ENCODE measurements at regions of chr15 and their contacts with region 1.

Region 1: DNA sequence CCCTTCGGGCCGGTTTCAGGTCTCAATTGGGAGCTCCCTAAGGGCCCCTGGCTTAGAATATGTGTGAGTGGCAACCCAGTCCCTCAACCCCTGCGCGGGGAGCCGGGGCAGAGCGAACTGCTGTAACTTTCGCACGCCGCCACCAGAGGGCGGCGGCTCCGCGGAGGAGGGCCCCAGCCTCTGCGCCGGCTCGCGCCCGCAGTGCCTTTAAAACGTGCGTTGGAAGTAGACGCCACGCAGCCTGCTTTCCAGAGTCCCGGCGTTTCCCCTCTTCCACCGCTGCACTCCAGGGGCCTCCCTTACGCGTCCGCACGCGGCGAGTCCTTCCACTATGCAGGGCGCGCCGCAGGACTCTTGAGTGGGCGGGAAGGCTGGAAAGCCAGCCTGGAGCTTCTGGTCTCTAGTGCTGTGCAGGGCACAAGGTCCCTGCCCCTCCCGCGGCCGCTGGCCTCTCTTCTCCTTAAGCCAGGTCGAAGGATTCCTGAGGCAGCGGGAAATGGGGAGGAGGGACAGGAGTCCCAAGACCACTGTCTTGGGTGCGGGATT is 23.7 kb upstream of the RNU6-1 start:
- DNase-seq: peak; percentile 62
- H3K4me3 ChIP-seq: peak overlapping the region; percentile 28 to 31
- H3K27ac ChIP-seq: peak overlapping the region; percentile 27 to 54
- H3K4me1 ChIP-seq: no peaks in the 10 kb centered on the region
- H3K27me3 ChIP-seq: no peaks in the 10 kb centered on the region
- CTCF ChIP-seq: peak; percentile 88 to 97 (median 94)
- POLR2A ChIP-seq: no peak

Region 2: DNA sequence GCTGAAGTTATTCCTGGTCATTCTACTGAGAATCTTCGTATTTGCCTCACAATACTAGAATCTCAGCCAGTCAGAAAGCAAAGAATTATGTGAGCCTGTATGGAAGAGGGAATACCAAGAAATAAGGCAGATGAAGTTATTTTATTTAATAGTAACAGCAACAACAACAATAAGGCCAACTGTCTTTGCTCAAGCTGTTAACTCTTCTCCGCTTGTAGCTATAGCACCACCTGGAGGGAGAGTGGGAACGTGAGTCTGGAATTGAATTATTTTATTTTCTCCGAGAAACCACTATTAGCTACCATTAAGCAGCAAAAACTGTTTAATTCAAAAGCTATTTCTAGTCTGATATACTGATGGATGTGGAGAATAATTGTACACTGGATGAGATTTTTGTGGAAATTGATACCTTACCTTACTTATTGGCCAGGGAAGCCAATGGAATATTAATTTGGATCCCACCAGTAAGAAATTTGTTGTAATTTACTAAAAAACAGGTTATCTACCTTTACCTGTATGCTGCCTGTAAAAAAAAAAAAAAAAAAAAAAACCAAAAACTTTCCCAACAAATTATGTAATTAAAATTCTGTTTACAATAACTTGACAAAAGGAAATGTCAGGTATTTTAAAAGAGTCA is 291.5 kb after region 1 on chr15:
- intact Hi-C with region 1: loop called (anchors 2 kb)
- DNase-seq: peak; percentile 35
- H3K4me3 ChIP-seq: no peak overlapping the region
- H3K27ac ChIP-seq: no peak overlapping the region
- H3K4me1 ChIP-seq: no peaks in the 10 kb centered on the region
- H3K27me3 ChIP-seq: no peaks in the 10 kb centered on the region
- CTCF ChIP-seq: peak; percentile 49 to 84 (median 76)
- POLR2A ChIP-seq: no peak

Region 3: DNA sequence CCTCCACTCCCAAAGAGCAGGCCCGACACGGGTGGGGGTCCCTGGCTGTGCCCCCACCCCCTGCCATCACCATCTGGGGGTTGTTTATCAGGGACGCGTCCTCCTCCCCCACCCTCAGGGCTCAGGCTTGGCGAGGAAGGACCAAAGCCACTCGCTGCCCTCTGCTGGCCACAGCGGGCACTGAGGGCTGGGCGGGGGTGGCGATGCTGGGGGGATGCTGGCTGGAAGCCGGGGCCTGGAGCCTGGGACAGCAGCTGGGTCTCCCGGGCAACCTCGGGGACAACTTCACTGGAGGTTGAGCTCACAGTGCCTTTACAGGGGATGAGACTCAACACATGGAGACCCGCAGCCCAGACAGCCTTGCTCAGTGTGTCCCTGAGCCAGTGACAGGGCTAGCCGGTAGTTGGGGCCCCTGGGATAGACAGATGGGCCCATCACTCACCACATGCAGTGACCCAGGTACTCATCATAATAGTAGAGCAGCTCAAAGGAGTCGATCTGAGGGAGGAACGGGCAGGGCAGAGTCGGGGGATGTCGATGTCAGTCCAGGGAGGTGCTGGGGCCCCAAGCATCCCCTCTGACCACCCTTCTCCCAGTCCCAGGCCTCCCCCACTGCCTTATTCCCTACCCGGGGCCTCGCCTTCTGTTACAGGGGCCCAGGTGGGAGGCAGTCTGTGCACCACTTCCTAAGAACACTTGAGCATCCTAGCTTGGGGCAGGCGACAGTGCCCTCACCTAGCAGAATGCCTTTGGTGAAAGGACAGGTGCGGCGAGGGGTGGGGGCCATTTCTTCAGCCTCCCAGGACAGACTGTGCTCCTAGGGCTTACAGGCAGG is 347.5 kb after region 1 on chr15:
- intact Hi-C with region 1: loop called (anchors 2 kb)
- DNase-seq: no peak
- H3K4me3 ChIP-seq: no peak overlapping the region
- H3K27ac ChIP-seq: peak overlapping the region; percentile 5 to 23
- H3K4me1 ChIP-seq: no peaks in the 10 kb centered on the region
- H3K27me3 ChIP-seq: no peaks in the 10 kb centered on the region
- CTCF ChIP-seq: peak; percentile 66 to 82 (median 78)
- POLR2A ChIP-seq: no peak